SK-N-SH (cell line): ENCODE measurements at regions of chr13 and their contacts with region 1.

Region 1: DNA sequence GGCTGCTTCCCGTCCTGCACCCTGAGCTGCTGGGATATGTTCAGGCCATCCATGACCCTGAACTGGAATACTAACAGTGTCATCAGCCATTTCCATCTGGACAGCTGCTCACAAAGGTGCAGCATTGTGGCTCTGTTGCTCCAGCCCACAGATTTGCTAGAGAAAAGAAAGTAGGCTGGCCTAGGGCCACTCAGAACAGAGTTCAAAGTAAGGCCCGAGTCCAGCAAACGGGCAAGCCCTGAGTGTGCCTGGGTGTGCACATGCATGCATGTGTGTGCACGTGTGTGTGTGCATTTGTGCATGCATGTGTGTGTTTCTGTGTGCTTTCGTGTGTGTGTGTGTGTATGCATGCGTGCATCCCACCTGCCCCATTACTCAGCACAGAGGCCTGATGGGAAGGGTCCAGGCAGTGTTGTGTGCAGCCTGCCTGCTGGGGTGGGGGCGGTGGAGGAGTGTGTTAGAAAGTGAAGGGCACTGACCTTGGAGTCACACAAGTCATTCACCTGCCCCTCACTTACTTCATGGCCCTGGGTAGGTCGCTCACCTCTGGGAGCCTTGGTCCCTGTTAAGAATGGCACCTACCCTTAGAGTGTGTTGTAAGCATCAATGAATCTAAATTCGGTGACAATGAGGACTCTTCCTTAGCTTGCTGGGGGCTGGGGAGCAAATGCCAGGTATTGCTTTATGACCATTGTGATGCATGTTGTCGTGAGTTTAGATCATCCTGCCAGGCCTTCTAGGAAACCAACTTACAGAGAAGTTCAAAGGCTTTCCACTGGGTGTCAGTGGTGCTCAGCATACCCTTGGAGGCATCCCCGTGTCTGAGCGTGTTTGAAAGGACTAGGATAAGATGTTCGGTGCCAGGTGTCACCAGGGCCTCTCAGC is 53.2 kb downstream of the GPR12 start:
- DNase-seq: peak; percentile 77
- H3K4me3 ChIP-seq: no peak overlapping the region
- H3K27ac ChIP-seq: no peak overlapping the region
- H3K4me1 ChIP-seq: no peaks in the 10 kb centered on the region; a peak in 1 of 4 replicates
- H3K27me3 ChIP-seq: no peaks in the 10 kb centered on the region
- CTCF ChIP-seq: peak; percentile 59
- EP300 ChIP-seq: no peak
- RAD21 ChIP-seq: peak; percentile 92

Region 2: DNA sequence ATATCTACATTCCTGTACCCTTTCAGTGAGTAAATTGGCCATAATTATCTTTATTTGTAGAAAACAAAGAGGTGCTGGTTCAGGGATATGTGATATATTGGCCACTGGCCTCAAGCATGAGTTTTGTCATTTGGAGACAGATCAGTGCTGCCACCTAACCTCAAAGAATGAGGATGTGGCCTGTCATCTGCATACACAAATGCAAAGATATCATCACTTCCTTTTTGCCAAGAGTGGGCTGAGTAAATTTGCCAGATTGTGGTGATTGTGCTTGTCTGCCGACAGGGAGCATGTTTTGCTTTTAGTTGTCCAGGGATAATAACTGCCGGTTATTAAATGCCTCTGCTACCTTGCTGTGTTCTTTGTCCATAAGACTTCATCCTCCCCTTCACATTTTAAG is 105.7 kb before region 1 on chr13:
- CTCF ChIA-PET with region 1: no interaction called
- POLR2A ChIA-PET with region 1: no interaction called
- DNase-seq: peak; percentile 53
- H3K4me3 ChIP-seq: no peak overlapping the region
- H3K27ac ChIP-seq: peak overlapping the region; percentile 10 to 74; a peak in 3 of 4 replicates
- H3K4me1 ChIP-seq: peaks cover 12 to 32% of the 10 kb centered on the region in 2 experiments; a peak in 3 of 4 replicates
- H3K27me3 ChIP-seq: no peaks in the 10 kb centered on the region
- CTCF ChIP-seq: peak; percentile 29
- EP300 ChIP-seq: peak; percentile 61 to 63; a peak in 3 of 4 replicates
- RAD21 ChIP-seq: peak; percentile 61

Region 3: GRCh38 chr13:26721251-26722121 is 14.1 kb after region 1 on chr13:
- CTCF ChIA-PET with region 1: interaction called, 41 read pairs
- POLR2A ChIA-PET with region 1: no interaction called
- DNase-seq: no peak
- H3K4me3 ChIP-seq: no peak overlapping the region
- H3K27ac ChIP-seq: no peak overlapping the region
- H3K4me1 ChIP-seq: no peaks in the 10 kb centered on the region; a peak in 1 of 4 replicates
- H3K27me3 ChIP-seq: no peaks in the 10 kb centered on the region; the same call in 1 of the 2 replicates
- CTCF ChIP-seq: no peak
- EP300 ChIP-seq: no peak
- RAD21 ChIP-seq: no peak

Region 4: GRCh38 chr13:26735677-26736076 is 28.3 kb after region 1 on chr13:
- CTCF ChIA-PET with region 1: no interaction called
- POLR2A ChIA-PET with region 1: no interaction called
- DNase-seq: no peak
- H3K4me3 ChIP-seq: no peak overlapping the region
- H3K27ac ChIP-seq: no peak overlapping the region
- H3K4me1 ChIP-seq: no peaks in the 10 kb centered on the region
- H3K27me3 ChIP-seq: no peaks in the 10 kb centered on the region
- CTCF ChIP-seq: no peak
- EP300 ChIP-seq: no peak
- RAD21 ChIP-seq: no peak

Region 5: DNA sequence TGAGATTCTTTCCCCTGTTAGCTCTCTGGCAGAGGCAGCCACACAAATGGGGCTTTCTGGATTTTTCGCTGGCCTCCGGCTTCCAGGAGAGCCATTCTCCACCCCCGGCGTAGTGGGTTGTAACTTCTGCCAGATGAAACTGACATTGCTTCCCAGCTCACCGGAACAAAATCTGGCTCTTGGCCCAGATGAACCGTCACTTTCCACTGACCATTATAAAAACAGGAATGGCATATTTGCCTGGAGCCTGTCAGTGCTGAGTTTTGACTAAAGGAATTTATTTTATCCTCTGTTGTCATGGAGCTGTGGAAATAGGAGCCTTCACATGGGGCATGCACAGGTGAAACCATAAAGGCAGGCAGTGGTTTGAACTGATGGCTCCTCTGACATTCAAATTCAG is 173.8 kb after region 1 on chr13:
- CTCF ChIA-PET with region 1: interaction called, 20 read pairs
- POLR2A ChIA-PET with region 1: no interaction called
- DNase-seq: peak; percentile 56
- H3K4me3 ChIP-seq: peak overlapping the region in 1 of 2 experiments; percentile 49; a peak in 2 of 4 replicates
- H3K27ac ChIP-seq: no peak overlapping the region
- H3K4me1 ChIP-seq: peaks cover 0 to 13% of the 10 kb centered on the region in 2 experiments; a peak in 2 of 4 replicates
- H3K27me3 ChIP-seq: no peaks in the 10 kb centered on the region; the same call in 1 of the 2 replicates
- CTCF ChIP-seq: no peak
- EP300 ChIP-seq: no peak
- RAD21 ChIP-seq: no peak